ENCODE measurements at regions of chr1 and their contacts with region 1.

Region 1: DNA sequence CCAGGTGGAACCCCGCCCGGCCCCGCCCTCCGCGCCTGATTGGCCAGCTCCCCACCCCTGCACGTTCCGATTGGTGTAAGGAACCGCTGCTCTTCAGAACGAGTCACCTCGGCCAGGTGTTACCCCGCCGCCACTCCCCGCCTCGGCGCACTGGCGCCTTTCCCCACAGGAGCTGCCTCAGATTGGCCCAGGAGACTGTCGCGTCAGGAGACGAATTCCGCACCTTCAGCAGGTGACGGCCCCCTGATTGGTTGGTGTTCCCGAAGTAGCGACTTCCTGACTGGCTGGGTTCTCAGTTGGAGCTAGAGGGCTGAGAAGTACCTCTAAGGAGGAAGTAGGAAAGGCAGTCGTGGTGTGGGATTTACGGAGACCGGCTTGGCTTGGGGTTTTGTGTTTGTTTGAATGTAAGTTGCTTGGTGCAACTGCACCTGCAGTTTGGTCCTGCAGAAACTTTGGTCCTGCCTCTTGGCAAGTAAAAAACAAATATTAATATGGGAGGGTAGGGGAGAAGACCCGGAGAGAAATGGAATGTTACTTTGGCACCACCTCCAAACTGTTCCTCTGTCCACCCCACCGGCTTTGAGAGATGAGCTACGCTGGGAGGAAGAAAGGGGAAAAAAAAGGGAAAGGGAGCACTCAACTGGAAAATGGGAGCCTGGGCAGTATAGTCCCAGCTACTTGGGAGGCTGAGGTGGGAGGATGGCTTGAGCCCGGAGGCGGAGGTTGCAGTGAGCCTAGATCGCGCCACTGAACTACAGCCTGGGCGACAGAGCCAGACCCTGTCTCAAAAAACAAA is 411 bp upstream of the F11R start:
- DNase-seq: peak; percentile 93 to 99
- H3K4me3 ChIP-seq: peak overlapping the region; percentile 79 to 97 (median 95)
- H3K27ac ChIP-seq: peak overlapping the region; percentile 74; the same call in 1 of the 2 replicates
- H3K4me1 ChIP-seq: peaks cover 7 to 17% (median 13%) of the 10 kb centered on the region in 4 experiments
- H3K27me3 ChIP-seq: no peaks in the 10 kb centered on the region
- CTCF ChIP-seq: no peak; a peak in 1 of 4 replicates
- EP300 ChIP-seq: no peak; a peak in 1 of 3 replicates
- POLR2A ChIP-seq: peak; percentile 87 to 95
- RAD21 ChIP-seq: no peak; a peak in 1 of 4 replicates

Region 2: DNA sequence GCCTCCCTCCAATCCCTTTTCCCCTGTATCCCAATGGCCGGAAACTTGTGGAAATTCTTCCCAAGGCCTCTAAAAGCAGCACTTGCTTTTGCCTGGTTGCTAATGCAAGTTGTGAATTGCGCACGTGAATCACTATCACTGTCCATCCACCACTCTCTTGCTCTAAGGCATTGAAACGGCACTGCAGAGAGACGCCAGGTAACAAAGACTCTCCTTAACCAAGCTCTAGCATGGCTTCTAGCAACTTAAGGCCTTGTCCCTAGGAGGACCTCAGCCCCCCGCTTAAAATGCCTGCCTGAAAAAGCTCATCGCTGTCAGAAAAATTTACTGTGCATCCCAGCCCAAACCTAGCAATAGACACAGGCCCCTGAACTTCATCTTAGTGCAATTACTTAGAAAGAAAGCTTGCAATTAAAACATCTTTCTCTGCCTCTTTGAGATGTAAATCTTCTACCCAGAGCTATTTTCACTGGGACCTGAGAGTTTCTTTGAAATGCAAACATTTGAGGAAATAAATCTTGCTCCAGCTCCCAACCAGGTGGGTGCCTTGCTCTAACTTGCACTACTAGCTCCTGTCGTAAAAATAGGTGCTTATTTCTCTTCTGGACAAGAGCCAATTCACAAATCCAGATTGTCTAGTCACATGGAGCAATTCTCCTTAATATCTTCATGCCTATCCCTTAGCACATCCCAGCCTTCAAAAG is 33.9 kb before region 1 on chr1:
- CTCF ChIA-PET with region 1: interaction called, 10 read pairs
- POLR2A ChIA-PET with region 1: interaction called, 15 read pairs
- DNase-seq: no peak
- H3K4me3 ChIP-seq: peak overlapping the region in 1 of 4 experiments; percentile 34; a peak in 4 of 8 replicates
- H3K27ac ChIP-seq: peak overlapping the region; percentile 55
- H3K4me1 ChIP-seq: peaks cover 5 to 16% (median 9%) of the 10 kb centered on the region in 4 experiments; a peak in 6 of 7 replicates
- H3K27me3 ChIP-seq: no peaks in the 10 kb centered on the region
- CTCF ChIP-seq: no peak
- EP300 ChIP-seq: no peak
- POLR2A ChIP-seq: no peak
- RAD21 ChIP-seq: no peak

Region 3: DNA sequence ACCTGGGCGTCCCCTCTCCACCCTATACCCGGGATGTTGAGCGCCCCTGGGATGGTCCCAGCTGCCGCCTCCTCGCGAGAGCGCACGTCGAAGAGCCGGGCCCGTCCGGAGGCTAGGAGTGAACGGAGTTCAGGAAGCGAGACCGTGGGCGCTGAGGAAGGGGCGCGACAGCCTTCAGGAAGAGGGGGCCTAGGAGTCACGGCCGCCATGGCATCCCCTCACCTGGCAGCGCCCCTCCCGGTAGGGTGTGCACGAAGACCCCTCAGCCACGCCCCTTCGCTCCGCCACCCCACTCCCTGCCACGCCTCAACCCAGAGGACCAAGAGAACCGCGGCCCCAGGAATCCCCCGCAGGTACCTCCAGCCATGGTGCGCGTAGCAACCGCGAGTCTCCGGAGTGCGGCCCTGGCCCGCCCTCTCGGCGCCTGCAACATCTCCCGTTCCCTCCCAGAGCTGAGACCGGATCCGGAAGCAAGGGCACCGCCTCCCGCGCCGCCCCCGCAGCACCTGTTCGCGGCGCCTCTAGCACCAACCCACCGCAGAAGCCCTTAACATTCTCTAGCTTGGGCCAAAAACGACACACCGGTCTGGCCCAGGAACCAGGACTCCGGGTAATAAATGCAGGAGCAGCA is 17.3 kb after region 1 on chr1 and contains the start of gene TSTD1:
- CTCF ChIA-PET with region 1: interaction called, 11 read pairs
- POLR2A ChIA-PET with region 1: interaction called, 50 read pairs
- DNase-seq: peak in 1 of 2 experiments; percentile 88
- H3K4me3 ChIP-seq: peak within 1 kb of the TSS; percentile 64 to 97 (median 85)
- H3K27ac ChIP-seq: 0 out of 2 replicates have a peak within 1 kb of the TSS, but pooled peaks have one; percentile 22
- H3K4me1 ChIP-seq: peaks cover 5 to 11% (median 8%) of the 10 kb centered on the region in 4 experiments; a peak in 6 of 7 replicates
- H3K27me3 ChIP-seq: no peaks in the 10 kb centered on the region
- CTCF ChIP-seq: peak in 1 of 3 experiments; percentile 34; a peak in 2 of 4 replicates
- EP300 ChIP-seq: no peak
- POLR2A ChIP-seq: peak; percentile 62 to 68
- RAD21 ChIP-seq: peak in 1 of 2 experiments; percentile 3; a peak in 1 of 4 replicates
- total RNA-seq, gene TSTD1: 60.4 and 60.9 TPM in 2 replicates

Region 4: DNA sequence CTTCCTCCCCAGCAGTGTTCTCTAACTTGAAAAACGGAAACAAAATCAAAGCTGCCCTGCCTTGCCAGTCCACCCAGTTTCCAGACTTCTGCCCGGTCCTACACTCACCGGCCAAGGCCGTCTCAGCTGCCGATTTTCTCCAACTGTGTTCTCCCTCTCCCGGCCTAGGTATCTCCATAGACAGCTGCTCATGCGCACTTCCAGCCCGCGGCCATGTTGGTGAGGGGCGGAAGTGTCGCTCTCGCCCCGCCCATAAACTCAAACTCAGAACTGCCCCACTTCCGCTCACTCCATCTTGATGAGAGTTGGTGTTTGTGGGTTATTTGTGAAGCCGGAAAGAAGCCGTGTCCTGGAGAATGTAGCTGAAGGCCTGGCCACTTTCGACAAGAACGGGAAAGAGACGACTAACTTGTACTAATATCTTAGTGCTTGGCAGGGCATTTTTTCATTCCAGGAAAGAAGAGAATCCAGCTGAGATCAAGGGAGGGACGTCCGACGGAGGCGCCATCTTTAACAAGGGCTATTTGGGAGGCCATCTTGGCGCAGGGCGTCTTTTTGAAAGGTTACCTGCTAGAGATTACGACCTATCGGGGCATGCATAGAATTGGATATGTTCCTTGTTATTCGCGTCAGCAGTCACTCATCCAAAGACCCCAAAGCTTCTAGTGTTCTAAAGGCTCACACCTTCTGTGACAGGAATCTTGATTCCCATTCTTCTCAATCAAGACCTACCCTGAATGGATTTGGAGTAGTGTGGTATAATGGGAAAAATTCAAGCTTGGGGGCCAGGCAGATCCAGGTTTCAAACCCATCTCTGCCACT is 24.6 kb after region 1 on chr1 and contains the start of gene USF1:
- CTCF ChIA-PET with region 1: interaction called, 11 read pairs
- POLR2A ChIA-PET with region 1: interaction called, 27 read pairs
- DNase-seq: peak; percentile 86 to 93
- H3K4me3 ChIP-seq: peak within 1 kb of the TSS; percentile 75 to 98 (median 87)
- H3K27ac ChIP-seq: peak within 1 kb of the TSS; percentile 97
- H3K4me1 ChIP-seq: peaks cover 0 to 4% (median 1%) of the 10 kb centered on the region in 4 experiments; a peak in 2 of 7 replicates
- H3K27me3 ChIP-seq: peaks cover 0 to 17% (median 8%) of the 10 kb centered on the region in 4 experiments; a peak in 6 of 7 replicates
- CTCF ChIP-seq: no peak
- EP300 ChIP-seq: no peak
- POLR2A ChIP-seq: peak; percentile 78 to 96
- RAD21 ChIP-seq: no peak
- total RNA-seq, gene USF1: 68.9 and 74.6 TPM in 2 replicates